Activated B cell treated with CpG ODN at 0.5 μM for 24 hours (primary cell): ENCODE measurements at regions of chr15 and their contacts with region 1.

Region 1: GRCh38 chr15:31326156-31326732 is 391 bp upstream of the KLF13 start:
- DNase-seq: peak; percentile 100
- ATAC-seq: peak; percentile 73
- H3K4me3 Mint-ChIP-seq: peak overlapping the region; percentile 93
- H3K27ac Mint-ChIP-seq: peak overlapping the region; percentile 86
- H3K4me1 Mint-ChIP-seq: peaks cover 62% of the 10 kb centered on the region
- H3K27me3 Mint-ChIP-seq: no peaks in the 10 kb centered on the region
- CTCF ChIP-seq: no peak

Region 2: GRCh38 chr15:31223478-31224350 is 102.5 kb before region 1 on chr15:
- CTCF ChIA-PET with region 1: interaction called, 5 read pairs
- POLR2A ChIA-PET with region 1: interaction called, 204 read pairs
- intact Hi-C with region 1: no loop called
- DNase-seq: no peak
- ATAC-seq: no peak
- H3K4me3 Mint-ChIP-seq: no peak overlapping the region
- H3K27ac Mint-ChIP-seq: peak overlapping the region; percentile 67
- H3K4me1 Mint-ChIP-seq: peaks cover 78% of the 10 kb centered on the region
- H3K27me3 Mint-ChIP-seq: no peaks in the 10 kb centered on the region
- CTCF ChIP-seq: no peak

Region 3: GRCh38 chr15:31302778-31303725 is 23.2 kb before region 1 on chr15:
- CTCF ChIA-PET with region 1: no interaction called
- POLR2A ChIA-PET with region 1: interaction called, 29 read pairs
- intact Hi-C with region 1: loop called (anchors 2 kb)
- DNase-seq: no peak
- ATAC-seq: peak; percentile 38
- H3K4me3 Mint-ChIP-seq: no peak overlapping the region
- H3K27ac Mint-ChIP-seq: peak overlapping the region; percentile 24
- H3K4me1 Mint-ChIP-seq: peaks cover 40% of the 10 kb centered on the region
- H3K27me3 Mint-ChIP-seq: no peaks in the 10 kb centered on the region
- CTCF ChIP-seq: no peak

Region 4: GRCh38 chr15:31365655-31366127 is 39.4 kb after region 1 on chr15:
- CTCF ChIA-PET with region 1: interaction called, 6 read pairs
- POLR2A ChIA-PET with region 1: interaction called, 12 read pairs
- intact Hi-C with region 1: loop called (anchors 2 kb)
- DNase-seq: peak; percentile 48
- ATAC-seq: peak; percentile 48
- H3K4me3 Mint-ChIP-seq: peak overlapping the region; percentile 67
- H3K27ac Mint-ChIP-seq: peak overlapping the region; percentile 66
- H3K4me1 Mint-ChIP-seq: peaks cover 99% of the 10 kb centered on the region
- H3K27me3 Mint-ChIP-seq: no peaks in the 10 kb centered on the region
- CTCF ChIP-seq: no peak

Region 5: DNA sequence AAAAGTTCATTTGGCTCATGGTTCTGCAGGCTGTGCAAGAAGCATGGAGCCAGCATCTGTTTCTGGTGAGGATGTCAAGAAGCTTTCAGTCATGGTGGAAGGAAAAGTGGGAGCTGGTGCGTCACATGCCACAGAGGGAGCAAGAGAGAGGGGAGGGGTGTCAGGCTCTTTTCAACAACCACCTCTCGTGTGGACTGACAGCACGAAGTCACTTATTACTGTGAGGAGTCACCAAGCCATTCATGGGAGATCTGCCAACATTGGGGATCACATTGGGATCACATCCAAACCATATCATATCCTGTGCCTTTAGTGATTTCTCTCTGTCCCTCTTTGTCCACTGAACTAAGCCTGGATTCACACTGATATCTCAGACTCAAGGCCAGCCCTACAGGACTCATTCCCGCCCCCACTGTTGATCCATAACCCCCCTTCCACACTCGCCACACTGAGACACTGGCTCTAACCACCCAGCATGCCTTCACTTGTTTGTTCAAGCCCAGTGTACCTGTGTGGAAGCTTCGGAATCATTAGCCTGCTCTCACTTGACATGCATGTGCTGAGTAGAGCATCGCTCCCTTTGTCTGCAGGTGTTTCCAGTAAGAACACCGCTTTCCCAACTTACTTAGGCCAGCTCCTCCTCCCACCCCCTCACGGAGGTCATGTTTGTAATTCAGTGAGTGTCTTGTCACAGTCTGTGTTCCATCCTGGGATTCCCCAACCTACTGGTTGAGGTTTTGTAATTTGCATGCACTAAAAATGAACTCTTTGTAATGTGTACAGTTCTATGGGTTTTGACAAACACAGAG is 132.6 kb after region 1 on chr15:
- CTCF ChIA-PET with region 1: interaction called, 3 read pairs
- POLR2A ChIA-PET with region 1: interaction called, 13 read pairs
- intact Hi-C with region 1: no loop called
- DNase-seq: no peak
- ATAC-seq: peak; percentile 98
- H3K4me3 Mint-ChIP-seq: peak overlapping the region; percentile 64
- H3K27ac Mint-ChIP-seq: peak overlapping the region; percentile 56
- H3K4me1 Mint-ChIP-seq: peaks cover 47% of the 10 kb centered on the region
- H3K27me3 Mint-ChIP-seq: no peaks in the 10 kb centered on the region
- CTCF ChIP-seq: no peak